Activated T-helper 1 cell treated with anti-CD3 and anti-CD28 coated beads, Interleukin-12 subunit alpha, Interleukin-12 subunit beta, Interleukin-2, Interleukin-4 antibody, amounts not matched to agents 30 ng/mL and 10 ng/mL and 1 ng/mL, durations not matched to agents 14 hours and 24 hours and 36 hours (primary cell): ENCODE measurements at regions of chr5 and their contacts with region 1.

Region 1: DNA sequence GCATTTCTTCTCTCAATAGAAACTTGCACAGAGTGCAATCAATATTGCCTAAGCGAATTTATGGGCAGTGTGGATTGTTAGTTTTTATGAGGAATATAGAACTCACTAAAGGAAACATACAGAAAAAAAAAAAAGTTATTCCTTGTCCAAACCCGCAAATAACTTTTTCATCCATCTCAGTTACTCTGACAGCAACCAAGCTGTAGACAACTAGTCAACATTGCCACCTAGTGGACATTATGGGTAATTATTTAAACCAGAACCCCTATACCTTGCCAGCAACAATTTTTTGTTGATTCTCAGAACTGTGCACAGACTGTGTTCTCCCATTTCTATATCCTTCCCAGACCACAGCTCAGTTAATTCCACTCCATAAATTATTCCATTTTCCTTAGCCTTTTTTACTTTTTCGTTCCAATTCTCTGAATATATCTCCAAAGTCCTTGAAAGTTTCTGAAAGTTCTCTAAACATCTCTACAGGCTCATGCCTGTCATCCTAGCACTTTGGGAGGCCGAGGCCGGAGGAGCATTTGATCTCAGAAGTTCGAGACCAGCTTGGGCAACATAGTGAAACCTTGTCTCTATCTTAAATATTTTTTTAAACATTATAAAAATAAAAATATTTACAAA is 2.6 kb upstream of the AFAP1L1 start:
- DNase-seq: no peak
- H3K4me3 Mint-ChIP-seq: no peak overlapping the region
- H3K27ac Mint-ChIP-seq: no peak overlapping the region
- H3K4me1 Mint-ChIP-seq: peaks cover 5% of the 10 kb centered on the region
- H3K27me3 Mint-ChIP-seq: peaks cover 44% of the 10 kb centered on the region

Region 2: GRCh38 chr5:148163345-148163744 is 1105.7 kb before region 1 on chr5:
- intact Hi-C with region 1: no loop called
- DNase-seq: no peak
- H3K4me3 Mint-ChIP-seq: no peak overlapping the region
- H3K27ac Mint-ChIP-seq: no peak overlapping the region
- H3K4me1 Mint-ChIP-seq: no peaks in the 10 kb centered on the region
- H3K27me3 Mint-ChIP-seq: peaks cover 1% of the 10 kb centered on the region

Region 3: GRCh38 chr5:149141224-149141956 is 127.7 kb before region 1 on chr5 and contains the start of gene ABLIM3:
- intact Hi-C with region 1: loop called (anchors 1 kb)
- DNase-seq: peak; percentile 61
- H3K4me3 Mint-ChIP-seq: peak within 1 kb of the TSS; percentile 43
- H3K27ac Mint-ChIP-seq: no peak within 1 kb of the TSS
- H3K4me1 Mint-ChIP-seq: no peaks in the 10 kb centered on the region
- H3K27me3 Mint-ChIP-seq: peaks cover 32% of the 10 kb centered on the region
- total RNA-seq, gene ABLIM3: not detected in 2 replicates

Region 4: DNA sequence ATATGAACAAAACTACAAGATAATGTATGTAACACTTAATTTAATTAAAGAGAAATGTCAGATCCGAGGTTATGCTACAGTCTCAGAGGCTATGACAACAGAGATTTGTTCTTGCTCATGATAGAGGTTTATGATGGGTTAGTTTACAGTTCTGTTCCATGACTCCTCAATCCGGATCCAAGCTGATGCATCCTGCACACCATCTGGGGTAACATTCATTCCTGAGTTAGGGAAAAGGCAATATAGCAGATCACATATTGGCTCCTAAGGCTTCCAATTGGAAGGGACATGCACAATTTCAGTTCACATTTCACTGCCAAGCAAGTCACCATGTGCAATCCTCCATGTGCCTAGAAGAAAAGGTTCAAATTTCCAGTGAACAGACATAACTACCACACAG is 87.3 kb before region 1 on chr5:
- intact Hi-C with region 1: loop called (anchors 10 kb)
- DNase-seq: no peak
- H3K4me3 Mint-ChIP-seq: no peak overlapping the region
- H3K27ac Mint-ChIP-seq: no peak overlapping the region
- H3K4me1 Mint-ChIP-seq: no peaks in the 10 kb centered on the region
- H3K27me3 Mint-ChIP-seq: peaks cover 18% of the 10 kb centered on the region